OCI-LY7 (cell line): ENCODE measurements at regions of chr2 and their contacts with region 1.

Region 1: DNA sequence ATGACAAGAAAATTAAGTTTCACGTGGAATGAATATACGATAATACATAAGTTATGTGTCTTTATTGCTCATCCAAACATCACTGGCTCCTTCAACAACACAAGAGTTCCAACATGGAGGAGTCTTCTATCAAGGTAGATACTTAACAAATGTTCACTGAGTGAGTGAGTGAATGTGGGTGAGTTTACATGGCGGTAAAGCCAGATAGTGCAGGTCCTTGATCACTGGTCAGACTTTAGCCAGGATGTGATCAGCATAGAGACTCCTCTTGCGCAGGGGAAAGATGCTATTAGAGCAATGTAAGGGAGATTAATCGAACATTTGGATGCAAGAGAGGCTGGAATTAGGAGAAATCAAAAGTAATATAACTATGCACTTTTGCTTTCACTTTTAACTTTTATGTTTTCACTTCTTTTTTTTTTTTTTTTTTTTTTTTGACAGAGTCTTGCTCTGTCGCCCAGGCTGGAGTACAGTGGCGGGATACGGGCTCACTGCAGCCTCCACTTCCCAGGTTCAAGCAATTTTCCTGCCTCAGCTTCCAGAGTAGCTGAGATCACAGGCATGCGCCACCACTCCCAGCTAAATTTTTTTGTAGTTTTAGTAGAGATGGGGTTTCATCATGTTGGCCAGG is 249.0 kb upstream of the ID2 start:
- DNase-seq: peak; percentile 38
- H3K4me3 ChIP-seq: peak overlapping the region; percentile 36
- H3K27ac ChIP-seq: peak overlapping the region; percentile 28
- H3K4me1 ChIP-seq: peaks cover 55% of the 10 kb centered on the region
- CTCF ChIP-seq: no peak

Region 2: GRCh38 chr2:8398040-8398668 is 34.7 kb before region 1 on chr2:
- CTCF ChIA-PET with region 1: no interaction called
- POLR2A ChIA-PET with region 1: no interaction called
- intact Hi-C with region 1: no loop called
- DNase-seq: no peak
- H3K4me3 ChIP-seq: no peak overlapping the region
- H3K27ac ChIP-seq: no peak overlapping the region
- H3K4me1 ChIP-seq: no peaks in the 10 kb centered on the region
- CTCF ChIP-seq: no peak

Region 3: DNA sequence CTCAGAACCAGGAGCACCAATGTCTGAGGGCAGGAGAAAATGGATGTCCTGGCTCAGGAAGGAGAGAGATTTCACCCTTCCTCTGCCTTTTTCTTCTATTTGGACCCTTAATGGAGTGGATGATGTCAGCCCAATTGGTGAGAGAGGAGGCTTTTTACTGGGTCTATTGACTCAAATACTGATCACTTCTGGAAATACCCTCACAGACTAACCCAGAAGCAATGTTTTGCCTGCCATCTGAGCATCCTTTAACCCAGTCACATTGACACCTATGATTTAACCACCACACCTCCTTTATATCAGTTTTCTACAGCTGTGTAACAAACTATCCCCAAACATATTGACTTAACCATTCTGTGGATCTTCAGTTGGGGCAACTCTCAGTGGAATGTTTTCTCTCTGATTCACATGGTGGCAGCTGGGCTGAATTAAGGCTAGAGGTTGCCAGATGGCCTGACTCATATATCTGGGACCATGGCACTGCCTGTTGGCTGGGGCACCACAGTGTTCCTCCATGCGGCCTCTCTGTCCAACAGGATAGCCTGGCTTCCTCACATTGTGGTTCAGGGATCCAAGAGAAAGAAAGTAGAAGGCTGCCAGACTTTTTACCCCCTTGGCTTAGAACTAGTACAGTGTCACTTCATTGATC is 588.9 kb after region 1 on chr2:
- CTCF ChIA-PET with region 1: interaction called, 20 read pairs
- POLR2A ChIA-PET with region 1: no interaction called
- intact Hi-C with region 1: no loop called
- DNase-seq: no peak
- H3K4me3 ChIP-seq: no peak overlapping the region
- H3K27ac ChIP-seq: no peak overlapping the region
- H3K4me1 ChIP-seq: no peaks in the 10 kb centered on the region
- CTCF ChIP-seq: no peak